Ascending aorta (tissue), 2 donors: ENCODE measurements at regions of chr5 and their contacts with region 1.

Region 1: GRCh38 chr5:143635146-143635752 is 176.7 kb upstream of the HMHB1 start:
- DNase-seq: peak in 1 of 2 donors; percentile 63
- H3K4me3 ChIP-seq: no peak overlapping the region
- H3K27ac ChIP-seq: peak overlapping the region; percentile 30 to 59
- H3K4me1 ChIP-seq: peaks cover 0 to 22% of the 10 kb centered on the region in 2 donors
- H3K27me3 ChIP-seq: no peaks in the 10 kb centered on the region
- CTCF ChIP-seq: no peak

Region 2: GRCh38 chr5:143564417-143564816 is 70.8 kb before region 1 on chr5:
- intact Hi-C with region 1: loop called (anchors 5 kb)
- DNase-seq: no peak
- H3K4me3 ChIP-seq: no peak overlapping the region
- H3K27ac ChIP-seq: no peak overlapping the region
- H3K4me1 ChIP-seq: peaks cover 0 to 11% of the 10 kb centered on the region in 2 donors
- H3K27me3 ChIP-seq: no peaks in the 10 kb centered on the region
- CTCF ChIP-seq: no peak

Region 3: DNA sequence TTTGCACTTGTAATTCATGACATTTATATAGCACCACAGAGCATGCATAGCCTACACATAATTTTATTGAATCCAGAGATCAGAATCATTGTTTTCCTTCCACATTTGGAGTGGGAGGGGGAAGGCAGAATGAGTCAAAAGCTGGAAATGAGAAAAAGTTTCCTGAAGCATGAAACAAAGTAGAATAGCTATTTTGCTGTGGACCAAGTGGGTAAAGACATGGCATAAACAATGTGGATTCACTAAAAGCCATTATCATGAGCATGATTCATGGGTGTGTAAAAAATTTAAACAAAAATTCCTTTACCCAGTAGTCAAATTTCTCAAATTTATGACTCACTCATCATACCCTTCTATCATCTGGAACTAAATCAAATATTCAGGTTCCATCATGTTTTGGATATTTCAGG is 437.3 kb after region 1 on chr5:
- intact Hi-C with region 1: no loop called
- DNase-seq: no peak
- H3K4me3 ChIP-seq: no peak overlapping the region
- H3K27ac ChIP-seq: no peak overlapping the region
- H3K4me1 ChIP-seq: no peaks in the 10 kb centered on the region
- H3K27me3 ChIP-seq: no peaks in the 10 kb centered on the region
- CTCF ChIP-seq: no peak